GM10248 (cell line): ENCODE measurements at regions of chr6 and their contacts with region 1.

Region 1: GRCh38 chr6:166275714-166276166 is 32.5 kb downstream of the PRR18 start:
- DNase-seq: peak; percentile 88
- CTCF ChIP-seq: peak; percentile 100

Region 2: GRCh38 chr6:166228839-166229528 is 46.8 kb before region 1 on chr6:
- CTCF ChIA-PET with region 1: no interaction called
- POLR2A ChIA-PET with region 1: no interaction called
- DNase-seq: peak; percentile 22
- CTCF ChIP-seq: no peak

Region 3: GRCh38 chr6:166286839-166287271 is 11.1 kb after region 1 on chr6:
- CTCF ChIA-PET with region 1: interaction called, 10 read pairs
- POLR2A ChIA-PET with region 1: no interaction called
- DNase-seq: peak; percentile 51
- CTCF ChIP-seq: no peak